Spleen (tissue), 13 donors: ENCODE measurements at regions of chr22 and their contacts with region 1.

Region 1: DNA sequence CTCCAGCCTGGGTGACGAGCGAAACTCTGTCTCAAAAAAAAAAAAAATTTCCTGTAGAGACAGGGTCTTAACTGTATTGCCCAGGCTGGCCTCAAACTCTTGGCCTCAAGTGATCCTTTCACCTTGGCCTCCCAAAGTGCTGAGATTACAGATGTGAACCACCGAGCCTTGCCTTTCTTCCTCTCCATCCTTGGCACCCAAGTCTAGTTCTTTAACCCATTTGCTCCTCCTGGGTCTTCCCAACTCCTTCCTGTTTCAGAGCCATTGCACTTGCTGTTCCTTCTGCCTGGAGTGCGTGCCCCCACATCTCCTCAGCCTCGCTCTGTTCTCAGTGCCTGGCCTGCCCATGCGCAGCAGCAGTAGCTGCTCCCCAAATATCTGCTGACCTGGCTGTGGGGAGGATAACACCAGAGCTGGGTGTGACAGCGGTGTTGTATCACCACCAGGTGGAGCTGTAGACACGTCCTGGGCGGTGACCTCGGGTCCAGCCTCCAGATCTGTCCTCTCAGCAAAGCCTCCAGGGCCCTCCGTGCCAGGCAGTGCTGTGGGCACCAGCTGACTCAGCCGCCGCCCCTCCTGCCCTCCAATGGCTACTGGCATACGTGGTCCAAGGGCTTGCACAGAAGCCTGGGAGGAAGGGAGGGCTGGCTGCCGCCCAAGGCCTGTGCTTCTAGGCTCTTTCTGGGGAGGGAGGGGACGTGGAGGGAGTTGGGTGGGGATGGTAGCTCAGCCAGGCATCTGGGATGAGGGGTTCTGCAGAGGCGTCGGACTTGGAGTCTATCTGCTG is 22.0 kb downstream of the TEF start:
- DNase-seq: peak; percentile 95
- H3K4me3 ChIP-seq: peak overlapping the region in 1 of 8 donors; percentile 35
- H3K27ac ChIP-seq: peak overlapping the region in 2 of 8 donors; percentile 1 to 52
- H3K4me1 ChIP-seq: peaks cover 8 to 26% (median 18%) of the 10 kb centered on the region in 6 donors
- H3K27me3 ChIP-seq: no peaks in the 10 kb centered on the region
- CTCF ChIP-seq: peak; percentile 93 to 99 (median 96)
- POLR2A ChIP-seq: no peak

Region 2: DNA sequence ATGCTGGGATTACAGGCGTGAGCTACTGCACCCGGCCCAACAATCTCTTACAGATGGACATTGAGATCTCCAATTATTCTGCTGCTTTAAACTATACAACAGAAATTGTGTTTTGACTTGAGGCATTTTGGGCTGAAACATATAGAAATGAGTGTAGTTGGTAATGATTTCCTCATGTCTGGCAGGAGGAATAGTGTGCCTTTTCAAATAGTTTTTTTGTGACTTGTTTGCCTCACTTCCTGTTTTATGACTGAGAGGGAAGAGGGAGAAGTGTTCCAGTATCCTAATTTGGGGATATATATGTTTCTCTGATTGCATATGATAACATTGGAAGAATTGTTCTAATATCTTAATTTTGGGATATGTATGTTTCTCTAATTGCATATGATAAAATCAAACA is 271.2 kb before region 1 on chr22:
- intact Hi-C with region 1: no loop called
- DNase-seq: no peak
- H3K4me3 ChIP-seq: no peak overlapping the region
- H3K27ac ChIP-seq: peak overlapping the region in 1 of 8 donors; percentile 11
- H3K4me1 ChIP-seq: peaks cover 0 to 24% (median 0%) of the 10 kb centered on the region in 6 donors
- H3K27me3 ChIP-seq: no peaks in the 10 kb centered on the region
- CTCF ChIP-seq: no peak
- POLR2A ChIP-seq: no peak

Region 3: DNA sequence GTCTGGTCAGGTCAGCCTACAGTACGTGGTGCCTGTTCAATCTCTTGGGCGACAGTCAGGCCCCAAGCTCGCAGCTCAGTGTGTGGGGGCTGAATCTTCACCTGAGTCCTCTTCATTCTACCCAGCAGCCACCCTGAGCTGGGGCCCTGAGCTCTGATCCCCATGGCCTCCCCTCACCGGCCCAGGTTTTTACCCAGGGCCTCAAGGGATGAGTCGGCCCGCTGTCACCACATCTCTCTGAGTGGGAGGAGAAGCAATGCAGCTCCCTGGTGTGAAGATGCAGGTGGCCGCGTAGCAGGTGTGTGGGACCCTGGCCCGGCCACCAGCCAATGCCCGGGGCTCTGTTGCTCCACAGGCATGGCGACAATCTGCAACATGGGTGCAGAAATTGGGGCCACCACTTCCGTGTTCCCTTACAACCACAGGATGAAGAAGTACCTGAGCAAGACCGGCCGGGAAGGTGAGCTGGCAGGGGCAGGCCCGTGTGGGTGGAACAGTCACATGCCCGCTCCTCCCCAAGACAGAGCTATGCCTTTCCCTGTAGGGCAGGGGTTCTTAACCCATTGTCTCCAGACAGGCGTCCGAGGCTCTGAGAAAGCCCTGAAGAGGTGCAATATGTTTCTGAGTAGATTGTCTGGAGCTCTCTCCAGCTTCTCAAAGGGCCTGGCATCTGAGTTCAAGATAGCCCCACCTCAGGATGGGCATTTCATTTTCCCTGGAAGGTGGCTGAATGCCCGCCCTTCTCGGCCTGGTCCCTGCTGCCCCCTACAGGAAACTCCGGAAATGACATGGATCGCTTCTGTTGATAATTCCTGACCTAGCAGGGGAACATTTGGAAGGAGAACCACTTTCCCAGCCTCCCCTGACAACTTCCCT is 113.7 kb after region 1 on chr22:
- intact Hi-C with region 1: loop called (anchors 5 kb)
- DNase-seq: no peak
- H3K4me3 ChIP-seq: no peak overlapping the region
- H3K27ac ChIP-seq: peak overlapping the region in 5 of 8 donors; percentile 12 to 66 (median 39)
- H3K4me1 ChIP-seq: peaks cover 0 to 21% (median 9%) of the 10 kb centered on the region in 6 donors
- H3K27me3 ChIP-seq: no peaks in the 10 kb centered on the region
- CTCF ChIP-seq: peak; percentile 64 to 86 (median 81)
- POLR2A ChIP-seq: no peak